HEK293 (cell line): ENCODE measurements at regions of chr6 and their contacts with region 1.

Region 1: DNA sequence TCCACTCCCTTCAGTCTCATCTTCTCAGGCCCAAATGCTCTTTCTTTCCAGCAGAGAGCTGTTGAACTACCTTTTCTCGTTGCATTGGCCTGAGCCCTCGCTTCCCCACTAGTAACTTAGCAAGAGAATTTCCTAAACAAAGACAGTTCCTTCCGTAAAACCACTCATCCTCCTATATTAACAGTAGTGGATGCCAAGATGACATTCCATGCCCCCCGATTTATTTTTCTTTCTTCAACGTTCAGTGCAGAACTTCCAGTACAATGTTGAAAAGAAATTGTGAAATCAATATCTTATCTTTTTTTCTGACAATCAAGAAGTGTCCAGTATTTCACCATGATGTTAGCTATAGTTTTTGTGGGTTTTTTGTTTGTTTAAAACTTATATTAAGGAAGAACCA is 45.8 kb downstream of the SOX4 start:
- H3K4me3 ChIP-seq: no peak overlapping the region
- H3K27ac ChIP-seq: no peak overlapping the region
- H3K4me1 ChIP-seq: no peaks in the 10 kb centered on the region
- CTCF ChIP-seq: no peak

Region 2: DNA sequence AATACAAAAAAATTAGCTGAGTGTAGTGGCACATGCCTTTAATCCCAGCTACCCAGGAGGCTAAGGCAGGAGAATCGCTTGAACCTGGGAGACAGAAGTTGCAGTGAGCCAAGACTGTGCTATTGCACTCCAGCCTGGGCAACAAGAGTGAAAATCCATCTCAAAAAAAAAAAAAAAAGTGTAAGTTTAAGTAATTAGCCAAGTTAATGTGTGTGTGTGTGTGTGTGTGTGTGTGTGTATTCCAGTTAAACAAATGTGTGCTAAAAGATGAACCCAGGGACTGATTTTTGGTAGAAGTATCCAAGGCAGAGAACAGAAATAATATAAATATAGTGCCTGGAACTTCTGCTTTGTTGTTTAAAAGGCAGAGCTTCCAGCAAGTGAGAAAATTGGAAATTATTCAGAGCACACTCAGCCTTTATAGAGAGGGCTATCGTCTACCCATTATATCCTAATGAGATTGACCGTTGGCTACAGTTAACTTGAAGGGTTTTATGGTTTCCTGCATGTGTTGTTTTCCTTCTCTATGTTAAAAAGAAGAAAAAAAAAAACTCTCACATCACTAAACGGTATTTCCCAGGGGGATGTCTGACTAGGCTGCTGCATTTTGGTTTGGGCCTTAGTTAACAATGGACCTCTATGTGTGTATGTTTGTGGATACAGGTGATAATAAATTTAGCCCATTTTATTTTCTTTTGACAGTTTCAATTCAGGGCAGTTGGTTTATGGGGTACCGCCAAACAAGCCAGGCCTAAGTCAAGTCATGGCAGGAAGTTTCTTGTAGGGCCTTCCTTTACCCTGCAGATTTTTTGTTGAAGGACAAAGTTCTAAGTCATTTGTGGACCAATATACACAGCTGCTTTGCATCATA is 36.0 kb before region 1 on chr6:
- CTCF ChIA-PET with region 1: no interaction called
- POLR2A ChIA-PET with region 1: interaction called, 10 read pairs
- H3K4me3 ChIP-seq: no peak overlapping the region
- H3K27ac ChIP-seq: peak overlapping the region; percentile 21
- H3K4me1 ChIP-seq: peaks cover 12% of the 10 kb centered on the region
- CTCF ChIP-seq: no peak

Region 3: GRCh38 chr6:21626756-21627155 is 12.6 kb before region 1 on chr6:
- CTCF ChIA-PET with region 1: no interaction called
- POLR2A ChIA-PET with region 1: no interaction called
- H3K4me3 ChIP-seq: no peak overlapping the region
- H3K27ac ChIP-seq: no peak overlapping the region
- H3K4me1 ChIP-seq: no peaks in the 10 kb centered on the region
- CTCF ChIP-seq: no peak

Region 4: DNA sequence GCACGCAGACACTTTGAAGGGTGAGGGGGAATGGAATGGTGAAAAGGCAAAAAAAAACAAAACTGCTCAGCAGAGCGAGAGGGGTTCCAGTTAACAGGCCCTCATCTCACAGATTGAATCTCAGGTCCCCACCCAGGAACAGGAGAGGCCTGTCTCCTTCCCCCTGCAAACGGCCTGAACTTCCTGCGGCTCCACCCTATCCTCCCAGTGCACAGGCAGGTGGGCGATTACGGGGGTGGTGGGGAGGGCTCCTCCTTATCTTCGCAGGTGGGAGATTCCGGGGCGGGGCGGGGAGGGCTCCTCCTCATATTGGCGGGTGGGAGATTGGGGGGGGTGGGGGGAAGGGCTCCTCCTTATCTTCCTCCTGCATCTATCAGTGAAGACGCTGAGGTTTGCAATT is 83.2 kb after region 1 on chr6:
- CTCF ChIA-PET with region 1: no interaction called
- POLR2A ChIA-PET with region 1: no interaction called
- H3K4me3 ChIP-seq: no peak overlapping the region
- H3K27ac ChIP-seq: no peak overlapping the region
- H3K4me1 ChIP-seq: no peaks in the 10 kb centered on the region
- CTCF ChIP-seq: no peak

Region 5: GRCh38 chr6:21846541-21847451 is 207.5 kb after region 1 on chr6:
- CTCF ChIA-PET with region 1: no interaction called
- POLR2A ChIA-PET with region 1: no interaction called
- H3K4me3 ChIP-seq: no peak overlapping the region
- H3K27ac ChIP-seq: peak overlapping the region; percentile 27; the same call in 1 of the 2 replicates
- H3K4me1 ChIP-seq: peaks cover 32% of the 10 kb centered on the region
- CTCF ChIP-seq: no peak

Region 6: GRCh38 chr6:21935561-21936028 is 296.3 kb after region 1 on chr6:
- CTCF ChIA-PET with region 1: no interaction called
- POLR2A ChIA-PET with region 1: no interaction called
- H3K4me3 ChIP-seq: no peak overlapping the region
- H3K27ac ChIP-seq: no peak overlapping the region
- H3K4me1 ChIP-seq: no peaks in the 10 kb centered on the region
- CTCF ChIP-seq: no peak